ENCODE measurements at regions of chr13 and their contacts with region 1.

Region 1: GRCh38 chr13:42377640-42378382 is 105.9 kb downstream of the AKAP11 start:
- DNase-seq: peak; percentile 91
- H3K4me3 Mint-ChIP-seq: peak overlapping the region; percentile 51
- H3K27ac Mint-ChIP-seq: peak overlapping the region; percentile 96
- H3K4me1 Mint-ChIP-seq: peaks cover 71% of the 10 kb centered on the region
- H3K27me3 Mint-ChIP-seq: no peaks in the 10 kb centered on the region

Region 2: DNA sequence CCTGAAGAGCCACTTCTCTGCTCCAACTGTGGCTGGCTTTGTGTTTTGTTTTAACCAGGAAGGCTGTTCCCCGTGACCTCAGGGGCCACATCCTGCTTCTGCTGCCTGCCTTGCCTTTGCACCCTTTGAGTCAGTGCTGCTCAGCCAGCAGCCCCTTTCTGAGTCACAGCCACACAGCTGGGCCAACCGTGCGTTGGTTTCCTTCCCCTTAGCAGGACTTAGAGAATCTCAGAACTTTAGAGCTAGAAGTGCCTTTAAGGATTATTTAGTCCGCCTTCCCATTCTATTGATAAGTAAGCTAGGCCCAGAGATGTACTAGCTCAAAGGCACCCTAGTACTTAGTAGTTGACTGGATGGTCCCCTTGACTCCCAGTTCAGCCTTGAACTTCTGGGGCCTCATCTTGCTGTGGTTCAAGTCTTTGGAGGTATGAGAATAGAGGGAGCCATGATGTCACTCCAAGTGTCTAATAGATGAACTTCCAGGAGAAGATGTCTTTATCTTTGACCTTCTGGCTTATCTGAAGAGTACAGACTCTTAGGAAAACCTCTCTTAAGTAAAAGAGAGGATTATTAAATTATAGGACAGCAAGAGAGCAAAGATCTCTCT is 912.5 kb before region 1 on chr13:
- intact Hi-C with region 1: loop called (anchors 10 kb)
- DNase-seq: peak; percentile 96
- H3K4me3 Mint-ChIP-seq: peak overlapping the region; percentile 88
- H3K27ac Mint-ChIP-seq: peak overlapping the region; percentile 99
- H3K4me1 Mint-ChIP-seq: peaks cover 79% of the 10 kb centered on the region
- H3K27me3 Mint-ChIP-seq: no peaks in the 10 kb centered on the region

Region 3: GRCh38 chr13:42354241-42355091 is 23.3 kb before region 1 on chr13:
- intact Hi-C with region 1: loop called (anchors 1 kb)
- DNase-seq: peak; percentile 80
- H3K4me3 Mint-ChIP-seq: peak overlapping the region; percentile 77
- H3K27ac Mint-ChIP-seq: peak overlapping the region; percentile 99
- H3K4me1 Mint-ChIP-seq: peaks cover 54% of the 10 kb centered on the region
- H3K27me3 Mint-ChIP-seq: no peaks in the 10 kb centered on the region

Region 4: DNA sequence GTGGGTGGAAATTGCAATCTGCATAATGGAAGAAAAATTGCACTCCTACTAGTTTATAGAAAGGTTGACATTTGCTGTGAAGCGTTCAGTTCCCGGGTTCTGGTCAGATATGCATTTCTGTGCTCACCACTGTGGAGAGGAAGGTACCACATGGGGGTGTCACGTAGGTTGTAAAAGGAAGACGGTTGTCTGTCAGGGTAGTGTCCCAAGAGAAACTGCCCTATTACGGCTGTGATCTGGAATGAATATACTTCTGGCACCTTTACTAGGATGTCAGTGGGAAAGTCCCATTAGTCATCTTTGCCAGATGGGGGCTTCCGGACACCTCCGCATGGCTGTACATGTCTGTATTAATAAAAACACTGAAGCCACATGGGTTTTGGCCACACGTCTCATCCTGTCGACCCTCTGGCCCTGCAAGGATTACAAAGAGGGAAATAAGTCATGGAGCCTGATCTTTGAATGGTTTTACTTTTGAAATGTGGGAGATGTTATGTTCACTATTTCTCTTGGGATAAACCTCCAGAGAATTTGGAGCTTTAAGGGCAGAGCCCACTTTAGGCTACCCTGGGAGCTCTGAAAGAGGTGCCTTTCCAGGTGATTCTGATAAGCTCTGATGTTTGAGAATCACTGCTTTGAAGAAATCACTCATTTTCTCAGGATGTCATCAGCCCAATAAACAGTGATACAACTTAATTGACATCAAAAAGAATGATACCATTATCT is 28.0 kb after region 1 on chr13:
- intact Hi-C with region 1: loop called (anchors 1 kb)
- DNase-seq: peak; percentile 81
- H3K4me3 Mint-ChIP-seq: peak overlapping the region; percentile 51
- H3K27ac Mint-ChIP-seq: peak overlapping the region; percentile 95
- H3K4me1 Mint-ChIP-seq: peaks cover 58% of the 10 kb centered on the region
- H3K27me3 Mint-ChIP-seq: no peaks in the 10 kb centered on the region

Region 5: DNA sequence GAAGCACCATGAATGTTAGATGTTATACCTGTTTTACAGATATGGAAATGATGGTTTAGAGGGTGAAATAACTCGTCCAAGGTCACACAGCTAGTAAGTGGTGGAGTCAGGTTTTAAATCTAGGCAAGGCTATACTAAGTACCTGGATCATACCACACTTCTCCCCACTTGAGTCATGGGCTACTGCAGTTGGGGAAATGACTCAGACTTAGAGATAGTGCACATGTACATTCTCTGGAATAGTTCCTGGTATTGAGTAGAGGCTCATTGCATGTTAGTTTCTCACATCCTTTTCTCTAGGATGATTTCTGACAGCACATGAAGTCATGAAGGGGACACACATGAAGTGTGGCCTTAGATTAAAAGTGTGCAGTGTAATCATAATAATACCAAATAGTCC is 120.0 kb after region 1 on chr13:
- intact Hi-C with region 1: loop called (anchors 1 kb)
- DNase-seq: peak; percentile 72
- H3K4me3 Mint-ChIP-seq: no peak overlapping the region
- H3K27ac Mint-ChIP-seq: peak overlapping the region; percentile 61
- H3K4me1 Mint-ChIP-seq: peaks cover 47% of the 10 kb centered on the region
- H3K27me3 Mint-ChIP-seq: no peaks in the 10 kb centered on the region

Region 6: GRCh38 chr13:42580644-42581043 is 202.8 kb after region 1 on chr13:
- intact Hi-C with region 1: no loop called
- DNase-seq: no peak
- H3K4me3 Mint-ChIP-seq: no peak overlapping the region
- H3K27ac Mint-ChIP-seq: no peak overlapping the region
- H3K4me1 Mint-ChIP-seq: peaks cover 9% of the 10 kb centered on the region
- H3K27me3 Mint-ChIP-seq: peaks cover 22% of the 10 kb centered on the region

Measured in activated CD4-positive, alpha-beta T cell treated with anti-CD3 and anti-CD28 coated beads, Interleukin-2, amount 10 ng/mL, durations not matched to agents 24 days and 14 days (primary cell).